Activated CD8-positive, alpha-beta T cell treated with anti-CD3 and anti-CD28 coated beads, Interleukin-2, amount 10 ng/mL, durations not matched to agents 7 days and 5 days (primary cell): ENCODE measurements at regions of chr7 and their contacts with region 1.

Region 1: DNA sequence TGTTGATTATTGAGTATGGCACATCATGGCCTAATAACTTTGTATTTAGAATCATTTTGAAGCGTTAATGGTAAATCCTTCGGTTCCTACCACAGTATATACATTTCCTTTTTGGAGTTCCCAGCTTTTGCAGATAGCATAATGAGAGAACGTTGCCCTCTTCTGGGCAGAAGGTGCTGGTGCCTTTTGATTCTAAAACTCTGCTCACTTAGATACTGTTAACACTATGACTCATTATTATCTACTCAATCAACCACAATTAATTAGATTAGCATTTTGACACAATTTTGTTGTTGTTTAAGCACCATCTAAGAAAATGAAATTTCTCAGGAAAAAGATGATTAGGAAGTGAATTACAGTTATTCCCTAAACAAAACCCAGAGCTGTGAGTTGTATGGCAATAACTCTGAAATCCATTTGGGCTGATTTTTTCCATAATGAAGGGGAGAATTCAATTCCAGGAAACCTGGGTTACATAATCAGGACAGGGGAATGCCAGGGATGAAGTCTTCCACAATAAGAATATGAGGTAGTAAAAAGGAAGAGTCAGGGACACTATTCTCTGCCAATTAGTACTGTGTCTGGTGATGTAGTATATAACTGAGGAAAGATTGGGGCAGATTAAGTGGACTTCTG is 11.5 kb upstream of the DLD start:
- DNase-seq: peak; percentile 51
- ATAC-seq: peak; percentile 58
- H3K4me3 Mint-ChIP-seq: no peak overlapping the region
- H3K27ac Mint-ChIP-seq: no peak overlapping the region
- H3K4me1 Mint-ChIP-seq: peaks cover 26% of the 10 kb centered on the region
- H3K27me3 Mint-ChIP-seq: peaks cover 5% of the 10 kb centered on the region

Region 2: DNA sequence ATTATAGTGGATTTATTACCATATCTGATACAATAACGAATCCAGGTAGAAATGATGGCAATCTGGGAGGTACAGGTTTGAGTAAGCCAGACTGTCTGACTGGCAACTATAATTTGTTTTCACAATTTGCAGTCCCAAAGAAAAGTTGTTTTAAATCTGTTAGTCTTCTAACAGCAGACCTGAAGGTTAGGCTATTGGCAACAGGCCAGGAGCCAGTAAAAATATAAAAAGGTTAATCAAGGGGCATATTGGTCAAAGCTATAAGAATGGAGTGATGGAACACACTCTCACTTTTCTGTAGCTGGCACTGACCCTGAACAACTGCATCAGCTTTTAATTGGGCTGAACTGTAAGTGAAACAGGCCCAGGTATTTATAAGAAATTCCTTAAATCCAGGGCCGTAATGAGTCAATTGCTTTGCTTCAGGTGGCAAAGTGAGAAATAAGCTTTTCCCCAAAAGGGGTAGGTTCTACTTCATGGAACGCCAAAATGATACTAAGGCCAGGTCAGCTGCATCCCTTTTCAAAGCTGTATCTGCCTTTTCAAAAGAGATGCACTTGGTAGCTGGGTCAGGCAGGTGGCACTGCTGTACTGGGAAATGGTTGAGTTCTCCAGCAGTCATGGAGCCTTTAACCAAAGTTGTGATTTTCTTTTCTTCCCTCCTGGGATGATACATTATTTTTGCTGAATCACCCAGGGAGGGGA is 416.6 kb before region 1 on chr7:
- CTCF ChIA-PET with region 1: interaction called, 16 read pairs
- POLR2A ChIA-PET with region 1: no interaction called
- DNase-seq: peak; percentile 57
- ATAC-seq: peak; percentile 80
- H3K4me3 Mint-ChIP-seq: no peak overlapping the region
- H3K27ac Mint-ChIP-seq: no peak overlapping the region
- H3K4me1 Mint-ChIP-seq: no peaks in the 10 kb centered on the region
- H3K27me3 Mint-ChIP-seq: no peaks in the 10 kb centered on the region

Region 3: DNA sequence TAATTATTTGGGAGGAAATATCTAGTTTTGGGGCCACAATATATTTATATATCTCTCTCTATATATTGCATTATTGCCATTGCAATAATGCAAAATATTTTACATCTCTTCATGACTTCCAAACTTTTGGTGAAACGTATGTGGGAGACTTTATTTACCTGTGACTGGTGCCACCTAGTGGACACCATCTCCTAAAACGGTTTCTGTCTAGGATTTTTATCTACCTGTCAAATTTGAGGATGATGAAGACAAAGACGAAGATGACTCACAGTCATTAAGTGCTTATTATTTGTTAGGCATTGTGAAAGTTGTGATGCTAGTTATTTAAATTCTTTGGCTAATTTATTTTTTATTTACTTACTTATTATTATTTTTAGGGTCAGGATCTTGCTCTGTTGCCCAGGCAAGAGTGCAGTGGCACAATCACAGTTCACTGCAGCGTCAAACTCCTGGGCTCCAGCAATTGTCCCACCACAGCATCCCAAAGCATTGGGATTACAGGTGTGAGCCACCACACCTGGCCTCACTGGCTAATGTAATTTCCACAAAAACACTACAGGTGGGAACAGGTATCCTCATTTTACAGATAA is 154.3 kb before region 1 on chr7:
- CTCF ChIA-PET with region 1: interaction called, 16 read pairs
- POLR2A ChIA-PET with region 1: no interaction called
- DNase-seq: peak; percentile 71
- ATAC-seq: no peak
- H3K4me3 Mint-ChIP-seq: no peak overlapping the region
- H3K27ac Mint-ChIP-seq: no peak overlapping the region
- H3K4me1 Mint-ChIP-seq: no peaks in the 10 kb centered on the region
- H3K27me3 Mint-ChIP-seq: peaks cover 34% of the 10 kb centered on the region

Region 4: GRCh38 chr7:107856806-107857540 is 22.5 kb before region 1 on chr7:
- CTCF ChIA-PET with region 1: interaction called, 17 read pairs
- POLR2A ChIA-PET with region 1: no interaction called
- DNase-seq: peak; percentile 66
- ATAC-seq: peak; percentile 88
- H3K4me3 Mint-ChIP-seq: peak overlapping the region; percentile 12
- H3K27ac Mint-ChIP-seq: peak overlapping the region; percentile 89
- H3K4me1 Mint-ChIP-seq: peaks cover 31% of the 10 kb centered on the region
- H3K27me3 Mint-ChIP-seq: peaks cover 6% of the 10 kb centered on the region

Region 5: GRCh38 chr7:107865956-107866775 is 13.4 kb before region 1 on chr7:
- CTCF ChIA-PET with region 1: interaction called, 17 read pairs
- POLR2A ChIA-PET with region 1: no interaction called
- DNase-seq: peak; percentile 48
- ATAC-seq: peak; percentile 71
- H3K4me3 Mint-ChIP-seq: no peak overlapping the region
- H3K27ac Mint-ChIP-seq: peak overlapping the region; percentile 65
- H3K4me1 Mint-ChIP-seq: peaks cover 27% of the 10 kb centered on the region
- H3K27me3 Mint-ChIP-seq: peaks cover 2% of the 10 kb centered on the region

Region 6: DNA sequence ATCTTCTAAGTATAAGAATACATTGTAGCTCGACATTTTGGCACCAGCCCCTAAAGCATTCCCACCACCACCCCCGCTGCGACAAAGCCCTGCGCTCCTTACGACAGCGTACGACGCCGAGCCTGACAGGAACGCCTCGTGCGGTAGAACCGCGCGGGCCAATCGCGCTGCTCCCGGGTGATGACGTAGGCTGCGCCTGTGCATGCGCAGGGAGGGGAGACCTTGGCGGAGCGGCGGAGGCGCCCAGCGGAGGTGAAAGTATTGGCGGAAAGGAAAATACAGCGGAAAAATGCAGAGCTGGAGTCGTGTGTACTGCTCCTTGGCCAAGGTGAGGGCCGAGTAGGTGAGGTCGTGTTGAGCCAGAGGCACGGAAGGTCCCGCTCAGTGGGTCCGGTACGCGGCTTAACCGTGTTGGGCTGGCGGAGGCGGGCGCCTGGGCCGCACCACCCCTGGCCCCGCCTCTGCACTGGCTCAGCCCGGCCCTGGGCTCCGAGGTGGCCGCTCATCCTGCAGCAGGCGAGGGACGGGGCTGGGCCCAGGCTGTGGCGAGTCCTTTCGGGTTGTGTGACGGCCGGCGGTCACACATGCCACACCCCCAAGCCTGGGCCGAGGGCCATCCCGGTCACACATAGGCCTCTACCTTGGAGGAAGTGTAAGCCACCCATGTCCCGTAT is 11.6 kb after region 1 on chr7 and contains the start of gene DLD:
- CTCF ChIA-PET with region 1: interaction called, 75 read pairs
- POLR2A ChIA-PET with region 1: interaction called, 4 read pairs
- DNase-seq: peak; percentile 96
- ATAC-seq: peak; percentile 99
- H3K4me3 Mint-ChIP-seq: peak within 1 kb of the TSS; percentile 88
- H3K27ac Mint-ChIP-seq: peak within 1 kb of the TSS; percentile 95
- H3K4me1 Mint-ChIP-seq: peaks cover 34% of the 10 kb centered on the region
- H3K27me3 Mint-ChIP-seq: peaks cover 4% of the 10 kb centered on the region
- total RNA-seq, gene DLD: 61.2 to 65.0 TPM

Region 7: GRCh38 chr7:107982918-107983389 is 103.4 kb after region 1 on chr7:
- CTCF ChIA-PET with region 1: no interaction called
- POLR2A ChIA-PET with region 1: no interaction called
- DNase-seq: no peak
- ATAC-seq: no peak
- H3K4me3 Mint-ChIP-seq: no peak overlapping the region
- H3K27ac Mint-ChIP-seq: no peak overlapping the region
- H3K4me1 Mint-ChIP-seq: no peaks in the 10 kb centered on the region
- H3K27me3 Mint-ChIP-seq: peaks cover 5% of the 10 kb centered on the region